ENCODE measurements at regions of chr7 and their contacts with region 1.

Region 1: GRCh38 chr7:132488634-132489302 is 87.5 kb downstream of the PLXNA4 start:
- DNase-seq: no peak
- ATAC-seq: no peak
- H3K4me3 ChIP-seq: no peak overlapping the region
- H3K4me3 Mint-ChIP-seq: no peak overlapping the region
- H3K27ac ChIP-seq: no peak overlapping the region
- H3K27ac Mint-ChIP-seq: peak overlapping the region in 1 of 9 donors; percentile 3
- H3K4me1 ChIP-seq: peaks cover 22 to 31% of the 10 kb centered on the region in 2 donors
- H3K4me1 Mint-ChIP-seq: peaks cover 29 to 56% (median 45%) of the 10 kb centered on the region in 7 donors
- H3K27me3 ChIP-seq: no peaks in the 10 kb centered on the region
- H3K27me3 Mint-ChIP-seq: peaks cover 0 to 42% (median 0%) of the 10 kb centered on the region in 5 donors

Region 2: GRCh38 chr7:132430861-132431822 is 57.6 kb before region 1 on chr7:
- CTCF ChIA-PET with region 1: no interaction called
- POLR2A ChIA-PET with region 1: interaction called, 5 read pairs
- intact Hi-C with region 1: loop called (anchors 1 kb)
- DNase-seq: peak in 8 of 9 donors; percentile 18 to 75 (median 60)
- ATAC-seq: peak; percentile 85
- H3K4me3 ChIP-seq: peak overlapping the region; percentile 21
- H3K4me3 Mint-ChIP-seq: peak overlapping the region; percentile 22 to 83 (median 58)
- H3K27ac ChIP-seq: peak overlapping the region; percentile 34
- H3K27ac Mint-ChIP-seq: peak overlapping the region; percentile 70 to 97 (median 87)
- H3K4me1 ChIP-seq: peaks cover 47 to 69% of the 10 kb centered on the region in 2 donors
- H3K4me1 Mint-ChIP-seq: peaks cover 49 to 93% (median 83%) of the 10 kb centered on the region in 7 donors
- H3K27me3 ChIP-seq: no peaks in the 10 kb centered on the region
- H3K27me3 Mint-ChIP-seq: no peaks in the 10 kb centered on the region

Region 3: DNA sequence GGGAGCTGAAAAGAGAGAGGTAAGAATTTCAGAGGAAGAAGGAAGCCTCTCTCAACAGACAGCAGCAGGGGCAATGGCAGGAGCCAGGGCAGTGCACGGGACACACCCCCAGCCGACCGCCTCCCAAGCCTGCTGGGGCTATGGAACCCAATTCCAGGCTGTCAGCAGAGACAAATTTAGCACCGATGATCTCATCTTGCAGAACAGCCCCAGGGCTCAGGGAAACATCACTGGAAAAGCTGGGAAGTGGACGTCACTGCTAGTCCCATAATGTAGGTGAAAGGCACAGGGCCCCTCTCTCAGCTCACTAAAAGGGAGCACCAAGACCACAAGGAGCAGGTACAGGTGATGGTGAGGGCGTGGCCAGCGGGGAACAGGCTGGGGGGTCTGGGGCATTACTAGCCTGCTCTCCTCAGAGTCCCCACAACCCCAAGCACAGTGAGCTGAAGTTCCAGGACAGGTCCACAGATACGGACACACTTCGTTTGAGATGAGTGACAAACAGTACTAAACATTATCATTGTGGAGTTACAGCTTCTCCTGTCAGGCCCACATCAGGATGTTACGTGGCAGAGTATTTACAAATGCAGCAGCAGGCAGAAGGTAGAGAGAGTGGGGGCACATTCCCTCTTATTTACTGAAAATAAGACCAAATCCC is 16.2 kb before region 1 on chr7:
- CTCF ChIA-PET with region 1: interaction called, 3 read pairs
- POLR2A ChIA-PET with region 1: interaction called, 8 read pairs
- intact Hi-C with region 1: loop called in 1 of 2 experiments (anchors 1 kb)
- DNase-seq: no peak
- ATAC-seq: no peak
- H3K4me3 ChIP-seq: no peak overlapping the region
- H3K4me3 Mint-ChIP-seq: peak overlapping the region in 2 of 10 donors; percentile 17 to 32
- H3K27ac ChIP-seq: no peak overlapping the region
- H3K27ac Mint-ChIP-seq: peak overlapping the region in 2 of 9 donors; percentile 36 to 53
- H3K4me1 ChIP-seq: peaks cover 0 to 11% of the 10 kb centered on the region in 2 donors
- H3K4me1 Mint-ChIP-seq: peaks cover 11 to 73% (median 27%) of the 10 kb centered on the region in 7 donors
- H3K27me3 ChIP-seq: no peaks in the 10 kb centered on the region
- H3K27me3 Mint-ChIP-seq: peaks cover 0 to 65% (median 0%) of the 10 kb centered on the region in 5 donors

Measured in naive thymus-derived CD4-positive, alpha-beta T cell (primary cell).